ENCODE measurements at regions of chr6 and their contacts with region 1.

Region 1: DNA sequence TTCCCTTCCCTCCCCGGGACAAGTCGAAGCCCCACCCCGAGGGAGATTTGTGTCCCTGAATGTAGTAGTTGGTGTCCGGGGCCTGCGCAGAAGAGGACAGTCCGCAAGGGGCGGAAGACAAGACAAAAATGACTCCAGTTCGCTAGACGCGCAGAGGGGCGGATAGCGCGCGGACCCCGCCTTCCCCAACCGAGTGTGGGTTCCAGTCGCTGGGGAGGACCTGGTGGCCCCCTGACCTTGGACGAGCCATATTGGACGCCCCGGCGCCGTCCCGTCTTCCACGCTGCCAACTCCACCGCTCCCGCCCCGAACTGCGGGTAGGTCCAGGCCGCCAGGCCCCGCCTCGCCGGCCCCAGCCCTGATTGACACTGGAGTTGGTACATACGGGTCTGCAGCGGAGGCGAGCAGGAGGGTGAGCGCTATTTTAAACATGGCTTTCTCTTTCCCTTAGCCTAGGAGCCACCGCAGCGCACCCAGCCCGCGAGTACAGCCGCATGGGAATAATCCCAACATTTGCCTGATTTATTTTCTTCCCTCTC is 802 bp downstream of the HMGN3 start:
- DNase-seq: peak; percentile 89
- H3K4me3 ChIP-seq: peak overlapping the region; percentile 66
- H3K4me3 Mint-ChIP-seq: peak overlapping the region; percentile 85
- H3K27ac Mint-ChIP-seq: peak overlapping the region; percentile 86
- H3K4me1 ChIP-seq: peaks cover 34% of the 10 kb centered on the region
- H3K4me1 Mint-ChIP-seq: peaks cover 34% of the 10 kb centered on the region
- H3K27me3 ChIP-seq: no peaks in the 10 kb centered on the region
- H3K27me3 Mint-ChIP-seq: no peaks in the 10 kb centered on the region
- CTCF ChIP-seq: peak in 1 of 2 experiments; percentile 48

Region 2: DNA sequence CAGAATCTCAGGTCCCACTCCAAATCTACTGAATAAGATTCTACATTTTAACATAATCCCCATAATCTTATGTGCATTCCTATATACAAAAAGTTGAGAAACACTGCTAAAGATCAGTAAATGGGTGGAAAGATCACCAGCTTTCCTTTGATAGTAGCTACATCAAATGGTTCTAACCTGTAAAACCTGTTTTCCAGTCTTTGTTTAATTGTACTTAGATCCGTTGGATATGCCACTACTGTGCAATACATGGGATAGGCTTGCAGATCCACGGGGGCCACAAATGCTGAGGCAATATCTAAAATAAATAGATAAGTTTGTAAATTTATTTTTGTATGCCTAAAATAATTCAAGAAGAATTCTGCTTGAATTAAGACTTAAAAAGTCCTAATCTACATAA is 272.2 kb before region 1 on chr6:
- CTCF ChIA-PET with region 1: no interaction called
- POLR2A ChIA-PET with region 1: no interaction called
- intact Hi-C with region 1: no loop called
- DNase-seq: peak in 1 of 2 experiments; percentile 13
- H3K4me3 ChIP-seq: no peak overlapping the region
- H3K4me3 Mint-ChIP-seq: no peak overlapping the region
- H3K27ac Mint-ChIP-seq: no peak overlapping the region
- H3K4me1 ChIP-seq: no peaks in the 10 kb centered on the region
- H3K4me1 Mint-ChIP-seq: no peaks in the 10 kb centered on the region
- H3K27me3 ChIP-seq: no peaks in the 10 kb centered on the region
- H3K27me3 Mint-ChIP-seq: no peaks in the 10 kb centered on the region
- CTCF ChIP-seq: no peak

Region 3: DNA sequence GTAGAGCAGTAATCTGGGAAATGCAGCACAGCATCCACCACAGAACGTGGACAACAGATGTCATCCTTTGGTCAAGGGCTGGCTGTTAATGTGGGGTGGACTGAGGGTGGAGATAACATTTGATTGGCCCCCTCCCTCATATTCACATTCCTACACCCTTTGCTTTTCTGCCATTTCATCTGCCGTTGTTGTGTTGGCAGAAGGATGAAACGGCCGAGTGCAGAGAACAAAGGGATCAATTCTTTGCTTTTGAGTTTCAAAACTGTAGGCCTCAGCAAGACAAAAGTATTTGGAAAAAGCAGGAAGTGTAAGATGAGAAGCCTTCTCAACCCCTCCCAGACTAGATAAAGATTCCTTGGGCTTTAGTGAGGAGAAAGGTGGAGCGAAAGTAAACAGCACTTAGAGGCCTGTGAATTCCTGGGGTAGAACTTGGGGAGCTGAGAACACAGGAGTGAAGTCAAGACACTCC is 81.4 kb before region 1 on chr6:
- CTCF ChIA-PET with region 1: no interaction called
- POLR2A ChIA-PET with region 1: no interaction called
- intact Hi-C with region 1: loop called (anchors 1 kb)
- DNase-seq: peak; percentile 77 to 86
- H3K4me3 ChIP-seq: no peak overlapping the region
- H3K4me3 Mint-ChIP-seq: no peak overlapping the region
- H3K27ac Mint-ChIP-seq: no peak overlapping the region
- H3K4me1 ChIP-seq: peaks cover 43% of the 10 kb centered on the region
- H3K4me1 Mint-ChIP-seq: peaks cover 10% of the 10 kb centered on the region
- H3K27me3 ChIP-seq: no peaks in the 10 kb centered on the region
- H3K27me3 Mint-ChIP-seq: no peaks in the 10 kb centered on the region
- CTCF ChIP-seq: peak in 1 of 2 experiments; percentile 2

Region 4: GRCh38 chr6:79302341-79302740 is 68.7 kb after region 1 on chr6:
- CTCF ChIA-PET with region 1: no interaction called
- POLR2A ChIA-PET with region 1: no interaction called
- intact Hi-C with region 1: loop called (anchors 1 kb)
- DNase-seq: no peak
- H3K4me3 ChIP-seq: no peak overlapping the region
- H3K4me3 Mint-ChIP-seq: no peak overlapping the region
- H3K27ac Mint-ChIP-seq: peak overlapping the region; percentile 68
- H3K4me1 ChIP-seq: peaks cover 48% of the 10 kb centered on the region
- H3K4me1 Mint-ChIP-seq: peaks cover 15% of the 10 kb centered on the region
- H3K27me3 ChIP-seq: no peaks in the 10 kb centered on the region
- H3K27me3 Mint-ChIP-seq: no peaks in the 10 kb centered on the region
- CTCF ChIP-seq: no peak

Region 5: GRCh38 chr6:79536954-79537747 is 303.5 kb after region 1 on chr6 and contains the start of gene LCA5:
- CTCF ChIA-PET with region 1: no interaction called
- POLR2A ChIA-PET with region 1: no interaction called
- intact Hi-C with region 1: loop called (anchors 10 kb)
- DNase-seq: peak; percentile 94 to 97
- H3K4me3 ChIP-seq: peak within 1 kb of the TSS; percentile 75
- H3K4me3 Mint-ChIP-seq: no peak within 1 kb of the TSS
- H3K27ac Mint-ChIP-seq: no peak within 1 kb of the TSS
- H3K4me1 ChIP-seq: peaks cover 36% of the 10 kb centered on the region
- H3K4me1 Mint-ChIP-seq: peaks cover 17% of the 10 kb centered on the region
- H3K27me3 ChIP-seq: no peaks in the 10 kb centered on the region
- H3K27me3 Mint-ChIP-seq: no peaks in the 10 kb centered on the region
- CTCF ChIP-seq: no peak
- total RNA-seq, gene LCA5: 10.9 and 12.2 TPM in 2 replicates

Measured in Caco-2 (cell line).